ENCODE measurements at regions of chr5 and their contacts with region 1.

Region 1: GRCh38 chr5:144390133-144390532 is 219.5 kb downstream of the KCTD16 start:
- DNase-seq: peak in 1 of 2 experiments; percentile 2
- H3K4me3 ChIP-seq: no peak overlapping the region
- H3K27ac ChIP-seq: no peak overlapping the region
- H3K4me1 ChIP-seq: no peaks in the 10 kb centered on the region
- H3K27me3 ChIP-seq: peaks cover 0 to 1% (median 0%) of the 10 kb centered on the region in 4 experiments; a peak in 1 of 7 replicates
- CTCF ChIP-seq: peak in 2 of 3 experiments; percentile 32 to 51; a peak in 2 of 4 replicates
- EP300 ChIP-seq: no peak
- POLR2A ChIP-seq: no peak
- RAD21 ChIP-seq: peak; percentile 56 to 73

Region 2: DNA sequence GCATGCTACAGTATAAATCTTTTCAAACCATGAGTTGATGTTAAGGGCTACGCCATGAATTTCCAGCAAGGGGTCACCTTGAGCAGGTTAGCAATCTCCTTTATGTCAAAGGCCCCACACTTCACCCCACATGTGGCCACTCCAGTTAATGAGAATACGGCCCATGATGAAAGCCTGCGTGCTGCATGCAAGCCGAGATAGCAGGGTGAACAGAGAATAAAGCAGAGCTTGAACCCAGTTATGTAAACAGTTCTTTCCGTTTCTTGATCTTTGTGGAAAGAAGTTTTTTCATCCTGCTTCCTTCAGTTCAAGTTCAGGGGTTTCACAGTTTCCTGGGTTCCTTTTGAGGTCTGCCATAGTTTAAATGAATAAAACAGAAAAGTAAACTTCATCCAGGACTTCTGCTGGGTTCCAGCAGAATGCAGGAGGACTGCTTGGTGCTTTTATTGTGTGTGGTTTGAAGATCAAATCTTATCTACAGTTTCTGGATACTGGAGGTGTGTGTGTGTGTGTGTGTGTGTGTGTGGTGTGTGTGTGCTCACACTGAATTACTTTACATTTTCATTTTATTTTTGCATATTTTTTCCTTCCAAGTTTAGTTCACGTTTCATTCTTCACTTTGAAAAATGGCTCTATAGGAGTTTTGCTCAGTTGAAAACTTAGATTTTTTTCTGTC is 491.1 kb before region 1 on chr5:
- CTCF ChIA-PET with region 1: no interaction called
- POLR2A ChIA-PET with region 1: no interaction called
- DNase-seq: no peak
- H3K4me3 ChIP-seq: no peak overlapping the region
- H3K27ac ChIP-seq: no peak overlapping the region
- H3K4me1 ChIP-seq: peaks cover 0 to 3% (median under 1%) of the 10 kb centered on the region in 4 experiments; a peak in 2 of 7 replicates
- H3K27me3 ChIP-seq: no peaks in the 10 kb centered on the region
- CTCF ChIP-seq: no peak
- EP300 ChIP-seq: no peak
- POLR2A ChIP-seq: no peak
- RAD21 ChIP-seq: no peak

Region 3: GRCh38 chr5:144203750-144204596 is 186.2 kb before region 1 on chr5:
- CTCF ChIA-PET with region 1: interaction called, 71 read pairs
- POLR2A ChIA-PET with region 1: no interaction called
- DNase-seq: peak in 1 of 2 experiments; percentile 49
- H3K4me3 ChIP-seq: 0 out of 8 replicates have a peak overlapping the region, but pooled peaks of 1 of the 4 experiments have one; percentile 69
- H3K27ac ChIP-seq: no peak overlapping the region
- H3K4me1 ChIP-seq: peaks cover 0 to 3% (median 0%) of the 10 kb centered on the region in 4 experiments; a peak in 2 of 7 replicates
- H3K27me3 ChIP-seq: peaks cover 0 to 10% (median 4%) of the 10 kb centered on the region in 4 experiments; a peak in 3 of 7 replicates
- CTCF ChIP-seq: peak in 2 of 3 experiments; percentile 67 to 79; a peak in 3 of 4 replicates
- EP300 ChIP-seq: no peak
- POLR2A ChIP-seq: no peak
- RAD21 ChIP-seq: peak; percentile 92 to 93

Region 4: DNA sequence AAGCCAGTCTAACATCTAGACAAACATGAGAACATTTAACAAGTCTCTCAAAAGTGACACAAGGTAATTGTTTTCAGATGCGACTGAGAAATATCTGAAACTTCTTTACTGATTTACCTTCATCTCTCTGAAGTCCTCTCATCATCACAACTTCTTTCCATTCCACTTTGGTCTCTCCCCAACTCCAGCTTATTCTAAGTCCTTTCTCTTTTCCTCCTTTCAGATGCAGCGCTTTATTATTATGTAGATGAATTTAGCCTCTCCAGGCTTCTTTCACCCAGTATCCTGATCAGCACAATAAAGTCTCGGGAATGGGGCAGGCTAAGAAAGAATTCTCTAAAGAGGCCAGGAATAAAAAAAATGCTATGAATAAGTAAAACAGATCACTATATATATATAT is 91.5 kb before region 1 on chr5:
- CTCF ChIA-PET with region 1: interaction called, 30 read pairs
- POLR2A ChIA-PET with region 1: no interaction called
- DNase-seq: no peak
- H3K4me3 ChIP-seq: peak overlapping the region in 1 of 4 experiments; percentile 24; a peak in 1 of 8 replicates
- H3K27ac ChIP-seq: no peak overlapping the region
- H3K4me1 ChIP-seq: peaks cover 5 to 16% (median 7%) of the 10 kb centered on the region in 4 experiments; a peak in 6 of 7 replicates
- H3K27me3 ChIP-seq: no peaks in the 10 kb centered on the region
- CTCF ChIP-seq: no peak
- EP300 ChIP-seq: no peak
- POLR2A ChIP-seq: no peak
- RAD21 ChIP-seq: no peak

Region 5: DNA sequence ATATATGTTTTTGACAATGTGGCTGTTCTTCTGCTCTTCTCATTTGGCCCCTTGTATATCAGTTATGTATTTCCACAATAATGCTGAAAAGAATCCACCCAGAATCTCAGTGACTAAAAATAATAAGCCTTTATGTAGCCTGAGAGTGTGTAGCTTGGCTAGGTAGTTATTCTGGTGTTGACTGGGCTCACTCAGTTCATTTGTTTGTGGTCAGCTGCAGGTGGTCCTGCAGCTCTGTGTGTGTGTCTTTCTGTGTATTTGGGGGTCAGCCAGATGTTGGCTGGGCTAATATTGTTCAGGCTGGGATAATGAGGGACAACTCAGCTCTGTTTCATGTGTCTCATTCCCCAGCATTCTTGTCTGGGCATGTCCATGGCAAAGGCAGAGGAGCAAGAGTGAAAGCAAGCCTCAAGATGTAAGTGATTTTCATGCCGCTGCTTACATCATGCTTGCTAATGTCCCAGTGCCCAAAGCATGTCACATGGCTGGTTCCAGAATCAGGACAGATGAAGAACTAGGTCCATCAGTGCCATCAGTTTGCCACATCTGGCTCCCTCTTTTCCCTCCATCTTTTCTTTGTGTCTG is 56.7 kb before region 1 on chr5:
- CTCF ChIA-PET with region 1: interaction called, 70 read pairs
- POLR2A ChIA-PET with region 1: no interaction called
- DNase-seq: no peak
- H3K4me3 ChIP-seq: no peak overlapping the region
- H3K27ac ChIP-seq: no peak overlapping the region
- H3K4me1 ChIP-seq: no peaks in the 10 kb centered on the region
- H3K27me3 ChIP-seq: no peaks in the 10 kb centered on the region
- CTCF ChIP-seq: no peak
- EP300 ChIP-seq: no peak
- POLR2A ChIP-seq: no peak
- RAD21 ChIP-seq: no peak

Region 6: GRCh38 chr5:144369006-144369405 is 21.1 kb before region 1 on chr5:
- CTCF ChIA-PET with region 1: interaction called, 20 read pairs
- POLR2A ChIA-PET with region 1: no interaction called
- DNase-seq: no peak
- H3K4me3 ChIP-seq: no peak overlapping the region
- H3K27ac ChIP-seq: no peak overlapping the region
- H3K4me1 ChIP-seq: no peaks in the 10 kb centered on the region
- H3K27me3 ChIP-seq: no peaks in the 10 kb centered on the region
- CTCF ChIP-seq: no peak
- EP300 ChIP-seq: no peak
- POLR2A ChIP-seq: no peak
- RAD21 ChIP-seq: no peak

Region 7: DNA sequence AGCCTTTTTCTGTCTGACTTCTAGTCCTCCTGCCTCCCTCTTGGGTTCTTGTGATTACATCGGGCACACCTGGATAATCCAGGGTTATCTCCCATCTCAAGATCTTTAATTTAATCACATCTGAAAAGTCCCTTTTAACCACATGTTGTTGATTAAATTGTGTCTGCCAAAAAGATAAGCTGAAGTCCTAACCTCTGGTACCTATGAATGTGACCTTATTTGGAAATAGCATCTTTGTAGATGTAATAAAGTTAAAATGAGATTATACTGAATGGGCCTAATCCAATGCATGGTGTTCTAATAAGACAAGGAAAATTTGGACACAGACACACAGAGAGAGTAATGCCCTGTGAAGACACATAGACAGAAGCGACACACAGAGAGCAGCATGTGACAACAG is 12.9 kb after region 1 on chr5:
- CTCF ChIA-PET with region 1: interaction called, 34 read pairs
- POLR2A ChIA-PET with region 1: no interaction called
- DNase-seq: no peak
- H3K4me3 ChIP-seq: no peak overlapping the region
- H3K27ac ChIP-seq: no peak overlapping the region
- H3K4me1 ChIP-seq: no peaks in the 10 kb centered on the region
- H3K27me3 ChIP-seq: no peaks in the 10 kb centered on the region; a peak in 1 of 7 replicates
- CTCF ChIP-seq: no peak
- EP300 ChIP-seq: no peak
- POLR2A ChIP-seq: no peak
- RAD21 ChIP-seq: no peak

Region 8: GRCh38 chr5:144467792-144468191 is 77.7 kb after region 1 on chr5:
- CTCF ChIA-PET with region 1: interaction called, 10 read pairs
- POLR2A ChIA-PET with region 1: no interaction called
- DNase-seq: peak in 1 of 2 experiments; percentile 56
- H3K4me3 ChIP-seq: no peak overlapping the region
- H3K27ac ChIP-seq: no peak overlapping the region
- H3K4me1 ChIP-seq: peaks cover 0 to 3% (median 0%) of the 10 kb centered on the region in 4 experiments; a peak in 1 of 7 replicates
- H3K27me3 ChIP-seq: no peaks in the 10 kb centered on the region
- CTCF ChIP-seq: peak in 2 of 3 experiments; percentile 61 to 79; a peak in 3 of 4 replicates
- EP300 ChIP-seq: no peak
- POLR2A ChIP-seq: no peak
- RAD21 ChIP-seq: peak; percentile 69 to 79